Lower leg skin (tissue), 4 donors: ENCODE measurements at regions of chr6 and their contacts with region 1.

Region 1: GRCh38 chr6:36917541-36918193 is 31.9 kb downstream of the C6orf89 start:
- DNase-seq: peak; percentile 65 to 88
- H3K4me3 ChIP-seq: no peak overlapping the region
- CTCF ChIP-seq: no peak
- POLR2A ChIP-seq: no peak

Region 2: GRCh38 chr6:36459501-36459900 is 458.2 kb before region 1 on chr6:
- intact Hi-C with region 1: no loop called
- DNase-seq: no peak
- H3K4me3 ChIP-seq: no peak overlapping the region
- CTCF ChIP-seq: no peak
- POLR2A ChIP-seq: no peak

Region 3: GRCh38 chr6:36969988-36970891 is 52.6 kb after region 1 on chr6:
- intact Hi-C with region 1: loop called (anchors 5 kb)
- DNase-seq: no peak
- H3K4me3 ChIP-seq: no peak overlapping the region
- CTCF ChIP-seq: no peak
- POLR2A ChIP-seq: no peak